Prostate gland (tissue), 2 donors: ENCODE measurements at regions of chr11 and their contacts with region 1.

Region 1: GRCh38 chr11:102495161-102496042 is 35.1 kb downstream of the MMP7 start:
- DNase-seq: peak; percentile 74
- H3K4me3 ChIP-seq: no peak overlapping the region
- H3K27ac ChIP-seq: no peak overlapping the region
- H3K4me1 ChIP-seq: no peaks in the 10 kb centered on the region
- H3K27me3 ChIP-seq: no peaks in the 10 kb centered on the region
- CTCF ChIP-seq: peak in 3 of 4 experiments; percentile 80 to 86 (median 83)
- POLR2A ChIP-seq: no peak

Region 2: DNA sequence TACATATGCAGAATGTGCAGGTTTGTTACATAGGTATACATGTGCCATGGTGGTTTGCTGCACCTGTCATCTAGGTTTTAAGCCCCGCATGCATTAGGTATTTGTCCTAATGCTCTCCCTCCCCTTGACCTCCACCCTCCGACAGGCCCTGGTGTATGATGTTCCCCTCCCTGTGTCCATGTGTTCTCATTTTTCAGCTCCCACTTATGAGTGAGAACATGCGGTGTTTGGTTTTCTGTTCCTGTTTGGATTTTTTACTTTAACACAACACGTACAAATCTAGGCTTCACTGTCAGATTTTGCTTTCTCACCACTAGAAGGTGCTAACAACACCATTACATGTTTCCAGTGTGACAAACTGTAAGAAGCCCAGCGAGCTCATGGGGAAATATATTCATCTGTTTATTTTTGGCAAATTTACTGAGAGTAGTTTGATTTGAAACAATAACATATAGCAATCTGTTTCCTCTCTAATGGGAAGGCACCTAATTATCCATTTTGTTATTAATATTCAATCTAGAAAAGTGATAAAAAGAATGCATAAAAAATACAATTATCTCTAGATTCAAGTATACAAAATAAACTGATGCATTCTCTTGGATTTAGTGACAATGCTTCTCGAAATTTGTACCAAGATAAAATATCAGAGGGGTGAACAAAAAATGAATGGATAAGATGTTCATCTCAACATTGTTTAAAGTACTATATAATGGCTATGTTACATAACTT is 201.4 kb before region 1 on chr11:
- intact Hi-C with region 1: loop called (anchors 5 kb)
- DNase-seq: peak; percentile 20
- H3K4me3 ChIP-seq: no peak overlapping the region
- H3K27ac ChIP-seq: no peak overlapping the region
- H3K4me1 ChIP-seq: no peaks in the 10 kb centered on the region
- H3K27me3 ChIP-seq: no peaks in the 10 kb centered on the region
- CTCF ChIP-seq: peak; percentile 12 to 71 (median 44)
- POLR2A ChIP-seq: no peak

Region 3: DNA sequence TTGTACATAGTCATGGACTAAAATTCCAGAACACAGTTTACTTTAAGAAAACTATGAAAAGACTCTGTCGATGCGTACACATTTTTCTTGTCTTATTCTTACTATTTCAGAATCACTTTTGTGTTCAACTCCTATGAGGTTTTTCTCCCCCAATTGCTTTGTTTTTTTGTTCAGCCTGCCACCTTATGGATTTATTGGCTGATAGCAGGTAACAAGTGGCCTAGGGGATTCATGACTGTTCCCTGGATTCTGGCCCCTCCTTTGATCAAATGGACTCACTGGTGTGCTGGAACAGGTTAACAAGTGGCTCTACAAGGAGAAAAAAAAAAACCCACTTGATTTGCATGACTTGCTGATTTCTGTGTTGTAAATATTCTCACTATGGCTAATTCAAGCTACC is 119.1 kb after region 1 on chr11:
- intact Hi-C with region 1: loop called (anchors 10 kb)
- DNase-seq: no peak
- H3K4me3 ChIP-seq: no peak overlapping the region
- H3K27ac ChIP-seq: no peak overlapping the region
- H3K4me1 ChIP-seq: no peaks in the 10 kb centered on the region
- H3K27me3 ChIP-seq: no peaks in the 10 kb centered on the region
- CTCF ChIP-seq: peak in 1 of 4 experiments; percentile 18
- POLR2A ChIP-seq: no peak

Region 4: DNA sequence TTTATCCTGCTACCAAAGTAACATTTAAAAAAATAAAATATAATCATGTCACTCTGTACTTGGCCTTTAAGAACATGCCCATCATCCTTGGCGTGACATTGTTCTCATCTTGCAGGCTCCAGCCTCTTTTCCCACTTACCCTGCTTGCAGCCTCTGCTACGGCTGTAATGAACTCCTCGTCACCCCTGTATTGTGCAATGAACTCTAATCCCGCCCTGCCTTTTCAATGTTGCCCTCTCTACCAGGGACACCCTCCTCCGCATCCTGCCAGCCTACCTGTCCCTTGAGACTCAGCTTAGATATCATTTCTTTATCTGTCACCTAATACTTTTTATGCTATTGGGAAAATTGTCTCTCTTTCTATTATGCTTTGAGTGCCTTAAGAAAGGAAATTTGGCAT is 142.3 kb after region 1 on chr11:
- intact Hi-C with region 1: no loop called
- DNase-seq: no peak
- H3K4me3 ChIP-seq: no peak overlapping the region
- H3K27ac ChIP-seq: no peak overlapping the region
- H3K4me1 ChIP-seq: no peaks in the 10 kb centered on the region
- H3K27me3 ChIP-seq: no peaks in the 10 kb centered on the region
- CTCF ChIP-seq: no peak
- POLR2A ChIP-seq: no peak